AG04449 (cell line): ENCODE measurements at regions of chr14 and their contacts with region 1.

Region 1: DNA sequence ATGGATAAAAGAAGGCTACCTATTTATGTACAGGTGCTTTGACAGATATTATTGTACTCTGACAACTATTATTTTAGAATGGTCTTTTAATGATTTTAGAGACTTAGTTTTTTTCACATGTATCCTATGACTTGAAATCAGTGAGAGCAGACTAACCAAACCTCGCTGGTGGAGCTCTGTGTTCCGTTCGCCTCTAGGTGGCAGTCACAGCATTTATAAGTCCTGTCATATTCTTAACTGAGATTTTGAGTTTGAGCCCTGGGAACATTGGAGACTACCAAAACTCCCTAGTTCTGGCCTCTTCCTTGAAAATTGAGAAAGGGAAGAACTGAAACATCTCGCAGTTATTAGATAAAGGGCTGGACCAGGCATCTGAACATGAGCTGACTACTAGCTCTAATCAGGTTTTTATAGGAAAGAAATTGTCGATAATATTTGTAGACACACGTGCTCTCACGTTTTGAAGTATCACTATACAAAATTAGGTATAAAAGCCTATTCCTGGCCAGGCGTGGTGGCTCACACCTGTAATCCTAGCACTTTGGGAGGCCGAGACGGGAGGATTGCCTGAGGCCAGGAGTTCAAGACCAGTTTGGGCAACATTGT is 48.3 kb downstream of the TTLL5 start:
- DNase-seq: peak; percentile 44
- H3K4me3 ChIP-seq: no peak overlapping the region
- CTCF ChIP-seq: peak; percentile 79

Region 2: DNA sequence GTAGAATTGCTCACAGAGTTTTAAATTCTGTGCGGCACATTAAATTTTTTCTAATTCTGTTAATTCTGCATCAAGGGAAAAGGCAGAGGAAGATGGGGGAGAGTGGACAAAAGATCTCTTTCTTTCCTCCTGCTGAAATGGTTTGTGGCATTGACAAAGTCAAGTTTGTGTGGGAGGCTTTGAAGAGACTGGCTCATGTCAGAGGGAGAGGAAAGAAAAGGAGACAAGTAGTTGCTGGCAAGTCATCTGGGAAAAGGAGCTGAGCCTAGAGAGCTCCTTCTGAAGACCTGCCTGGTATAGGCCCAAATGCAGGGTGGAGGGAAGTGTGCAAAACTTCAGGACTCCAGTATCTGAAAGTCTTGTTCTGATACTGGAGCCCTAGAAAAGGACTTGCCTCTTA is 11.9 kb before region 1 on chr14:
- CTCF ChIA-PET with region 1: interaction called, 30 read pairs
- POLR2A ChIA-PET with region 1: no interaction called
- DNase-seq: no peak
- H3K4me3 ChIP-seq: no peak overlapping the region
- CTCF ChIP-seq: no peak

Region 3: GRCh38 chr14:75748336-75748735 is 39.0 kb after region 1 on chr14:
- CTCF ChIA-PET with region 1: interaction called, 11 read pairs
- POLR2A ChIA-PET with region 1: no interaction called
- DNase-seq: no peak
- H3K4me3 ChIP-seq: no peak overlapping the region
- CTCF ChIP-seq: no peak

Region 4: GRCh38 chr14:75879031-75879430 is 169.7 kb after region 1 on chr14:
- CTCF ChIA-PET with region 1: interaction called, 12 read pairs
- POLR2A ChIA-PET with region 1: no interaction called
- DNase-seq: peak; percentile 86
- H3K4me3 ChIP-seq: no peak overlapping the region
- CTCF ChIP-seq: no peak

Region 5: DNA sequence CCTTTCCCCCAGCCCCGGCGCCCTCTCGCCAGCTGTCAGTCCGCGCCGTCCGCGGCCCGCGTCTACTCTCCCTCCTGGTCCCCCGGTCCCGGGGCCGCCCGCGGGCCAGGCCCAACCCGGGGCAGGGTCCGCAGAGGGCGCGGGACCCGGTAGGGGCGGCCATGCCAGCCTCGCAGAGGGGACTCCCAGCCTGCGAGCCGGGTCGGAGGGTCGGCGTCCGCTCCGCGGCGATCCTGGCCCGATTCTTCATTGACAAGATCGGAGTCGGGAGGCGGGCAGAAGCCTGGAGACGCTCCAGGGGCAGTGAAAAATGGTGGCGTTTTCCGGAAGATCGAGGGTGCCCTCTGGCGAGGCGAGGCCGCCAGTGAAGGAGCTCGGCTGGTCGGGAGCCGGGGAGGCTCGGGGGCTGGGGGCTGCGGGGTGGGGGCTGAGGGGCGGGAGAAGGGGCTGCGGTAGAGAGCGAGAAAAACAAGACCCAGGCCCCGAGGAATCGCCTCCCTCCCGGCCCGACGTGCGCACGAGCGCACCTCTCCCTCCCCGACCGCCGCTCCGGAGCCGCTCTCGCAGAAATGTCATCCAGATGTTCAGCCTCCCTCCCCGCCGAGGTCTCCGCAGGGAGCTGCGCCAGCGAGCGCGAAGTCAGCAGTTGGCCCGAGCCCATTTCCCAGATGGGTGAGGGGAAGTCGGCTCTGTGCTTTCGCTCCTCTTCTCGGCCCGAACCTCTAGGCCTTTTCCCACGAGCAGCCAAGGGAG is 273.1 kb after region 1 on chr14:
- CTCF ChIA-PET with region 1: interaction called, 715 read pairs
- POLR2A ChIA-PET with region 1: interaction called, 7 read pairs
- DNase-seq: no peak
- H3K4me3 ChIP-seq: peak overlapping the region; percentile 66
- CTCF ChIP-seq: peak; percentile 84

Region 6: GRCh38 chr14:76050797-76051392 is 341.6 kb after region 1 on chr14:
- CTCF ChIA-PET with region 1: interaction called, 20 read pairs
- POLR2A ChIA-PET with region 1: no interaction called
- DNase-seq: peak; percentile 17
- H3K4me3 ChIP-seq: no peak overlapping the region
- CTCF ChIP-seq: peak; percentile 51